ENCODE measurements at regions of chr1 and their contacts with region 1.

Region 1: DNA sequence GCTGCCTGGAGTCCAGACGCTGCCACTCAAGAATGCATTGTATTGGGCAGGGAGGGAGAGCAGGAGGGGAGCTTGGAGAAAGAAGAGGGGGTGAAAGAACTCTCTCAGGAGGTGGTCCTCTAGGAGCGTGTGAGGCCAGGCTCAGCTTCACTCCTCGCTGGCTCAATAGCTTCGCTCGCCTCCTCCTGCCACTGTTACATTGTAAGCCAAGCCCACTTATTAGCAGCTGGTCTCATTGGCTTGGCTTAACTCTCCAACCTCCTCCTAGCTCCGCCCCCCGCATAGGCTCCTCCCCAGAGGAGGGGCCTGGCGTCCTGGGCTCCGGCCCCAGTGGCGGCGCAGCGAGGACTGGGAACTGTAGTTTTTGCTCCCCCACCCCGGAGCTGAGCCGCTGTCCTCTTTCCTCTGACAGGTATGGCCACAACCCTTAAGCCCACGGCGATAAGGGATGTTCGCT is at the start of gene KCNN3:
- DNase-seq: peak; percentile 89 to 97
- H3K4me3 ChIP-seq: no peak within 1 kb of the TSS
- CTCF ChIP-seq: no peak
- POLR2A ChIP-seq: no peak
- total RNA-seq, gene KCNN3: 0.13 to 2.1 (median 0.36) TPM

Region 2: GRCh38 chr1:154559466-154560088 is 310.6 kb before region 1 on chr1:
- intact Hi-C with region 1: loop called (anchors 10 kb)
- DNase-seq: peak; percentile 85 to 96
- H3K4me3 ChIP-seq: no peak overlapping the region
- CTCF ChIP-seq: peak in 1 of 3 donors; percentile 64
- POLR2A ChIP-seq: no peak

Region 3: GRCh38 chr1:155167166-155168104 is 297.3 kb after region 1 on chr1:
- intact Hi-C with region 1: no loop called
- DNase-seq: peak; percentile 80 to 97
- H3K4me3 ChIP-seq: no peak overlapping the region
- CTCF ChIP-seq: peak in 1 of 3 donors; percentile 17
- POLR2A ChIP-seq: no peak

Region 4: GRCh38 chr1:156489166-156489934 is 1619.2 kb after region 1 on chr1:
- intact Hi-C with region 1: no loop called
- DNase-seq: no peak
- H3K4me3 ChIP-seq: no peak overlapping the region
- CTCF ChIP-seq: no peak
- POLR2A ChIP-seq: no peak

Measured in lower leg skin (tissue), 4 donors.